Activated CD4-positive, alpha-beta memory T cell treated with anti-CD3 and anti-CD28 coated beads for 36 hours (primary cell): ENCODE measurements at regions of chr18 and their contacts with region 1.

Region 1: DNA sequence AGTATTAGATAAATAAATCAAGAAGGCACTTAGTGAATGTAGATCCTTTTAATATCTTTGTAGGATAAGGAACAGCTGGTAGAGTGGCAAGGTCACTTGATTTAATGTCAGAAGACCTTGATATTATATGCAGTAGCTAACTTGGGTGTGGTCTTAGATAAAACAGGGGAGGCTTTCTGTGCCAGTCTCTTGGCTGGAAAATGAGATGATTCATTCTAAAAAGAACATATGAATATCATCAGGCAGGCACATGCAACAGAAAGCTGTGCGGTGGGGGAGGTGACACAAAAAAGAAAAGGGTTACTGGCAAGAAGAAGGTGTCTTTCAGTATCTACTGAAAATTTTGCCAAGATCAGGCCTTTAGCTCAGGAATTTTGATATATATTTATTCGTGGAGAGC is 931.7 kb upstream of the CELF4 start:
- DNase-seq: peak; percentile 10
- H3K4me3 Mint-ChIP-seq: no peak overlapping the region
- H3K27ac Mint-ChIP-seq: no peak overlapping the region
- H3K4me1 Mint-ChIP-seq: peaks cover 2% of the 10 kb centered on the region
- H3K27me3 Mint-ChIP-seq: no peaks in the 10 kb centered on the region

Region 2: DNA sequence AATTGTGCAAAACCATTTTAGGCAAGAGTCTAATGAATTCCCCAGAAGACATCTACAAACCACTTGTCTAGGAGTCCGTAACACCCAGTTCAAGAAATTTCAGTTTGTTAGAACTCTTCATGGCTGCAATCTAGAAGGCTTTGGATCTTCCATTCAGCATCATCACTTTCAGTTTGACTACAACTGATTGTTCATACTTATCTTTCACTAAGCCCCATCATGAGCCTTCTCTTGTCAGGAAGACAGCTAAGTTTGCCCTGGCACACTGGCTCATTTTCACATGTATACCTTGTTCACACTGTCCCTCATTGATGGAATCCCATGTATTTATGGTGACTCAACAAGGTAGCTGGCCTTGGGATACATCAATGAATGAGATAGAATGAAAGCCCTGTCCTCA is 33.2 kb before region 1 on chr18:
- CTCF ChIA-PET with region 1: no interaction called
- POLR2A ChIA-PET with region 1: no interaction called
- intact Hi-C with region 1: loop called (anchors 1 kb)
- DNase-seq: no peak
- H3K4me3 Mint-ChIP-seq: no peak overlapping the region
- H3K27ac Mint-ChIP-seq: no peak overlapping the region
- H3K4me1 Mint-ChIP-seq: no peaks in the 10 kb centered on the region
- H3K27me3 Mint-ChIP-seq: no peaks in the 10 kb centered on the region

Region 3: DNA sequence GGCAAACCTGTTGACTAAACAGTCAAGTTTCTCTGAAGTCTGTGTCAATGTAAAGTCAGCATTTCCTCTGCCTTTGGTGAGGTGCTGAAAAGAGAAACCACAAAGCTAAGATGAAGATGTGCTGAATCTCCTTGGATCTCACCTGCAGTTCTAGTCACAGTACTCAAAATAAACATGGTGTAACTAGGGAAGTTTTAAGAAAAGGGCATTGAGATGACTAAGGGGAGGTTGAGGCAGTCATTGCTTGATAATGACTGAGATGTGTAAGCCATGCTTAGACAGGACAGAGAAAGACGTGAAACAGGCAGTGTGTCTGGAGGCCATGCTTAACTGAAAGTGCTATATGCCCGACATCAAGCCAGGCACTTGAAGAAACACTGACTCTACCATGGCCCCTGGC is 78.4 kb after region 1 on chr18:
- CTCF ChIA-PET with region 1: no interaction called
- POLR2A ChIA-PET with region 1: no interaction called
- intact Hi-C with region 1: loop called (anchors 1 kb)
- DNase-seq: peak; percentile 13
- H3K4me3 Mint-ChIP-seq: peak overlapping the region; percentile 45
- H3K27ac Mint-ChIP-seq: peak overlapping the region; percentile 75
- H3K4me1 Mint-ChIP-seq: peaks cover 19% of the 10 kb centered on the region
- H3K27me3 Mint-ChIP-seq: no peaks in the 10 kb centered on the region

Region 4: GRCh38 chr18:38751898-38752297 is 254.6 kb after region 1 on chr18:
- CTCF ChIA-PET with region 1: no interaction called
- POLR2A ChIA-PET with region 1: no interaction called
- intact Hi-C with region 1: loop called (anchors 2 kb)
- DNase-seq: peak; percentile 35
- H3K4me3 Mint-ChIP-seq: no peak overlapping the region
- H3K27ac Mint-ChIP-seq: no peak overlapping the region
- H3K4me1 Mint-ChIP-seq: peaks cover 10% of the 10 kb centered on the region
- H3K27me3 Mint-ChIP-seq: no peaks in the 10 kb centered on the region